ENCODE measurements at regions of chr11 and their contacts with region 1.

Region 1: GRCh38 chr11:116791002-116791812 is 472 bp downstream of the APOA5 start:
- DNase-seq: peak; percentile 81 to 87 (median 85)
- ATAC-seq: peak; percentile 71
- H3K4me3 ChIP-seq: no peak overlapping the region
- H3K4me1 ChIP-seq: peaks cover 11% of the 10 kb centered on the region
- CTCF ChIP-seq: peak; percentile 89

Region 2: DNA sequence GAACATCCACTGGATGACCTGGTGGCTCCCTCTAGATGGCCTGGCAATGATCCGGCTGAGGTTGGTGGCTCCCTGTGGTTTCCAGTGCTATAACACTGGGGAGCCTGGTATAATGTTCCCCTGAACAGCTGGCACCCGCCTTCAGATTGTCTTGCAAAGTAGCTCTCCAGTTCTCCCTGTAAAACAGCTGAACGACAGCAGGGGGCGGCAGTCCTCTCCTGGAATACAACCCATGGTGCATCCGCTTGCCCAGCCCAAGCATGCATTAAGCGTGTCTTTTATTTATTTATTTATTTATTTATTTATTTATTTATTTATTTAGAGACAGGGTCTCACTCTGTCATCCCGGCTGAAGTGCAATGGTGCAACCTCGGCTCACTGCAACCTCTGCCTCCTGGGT is 277.3 kb before region 1 on chr11:
- intact Hi-C with region 1: no loop called
- DNase-seq: peak in 2 of 3 donors; percentile 68 to 69
- ATAC-seq: peak; percentile 58
- H3K4me3 ChIP-seq: no peak overlapping the region
- H3K4me1 ChIP-seq: no peaks in the 10 kb centered on the region
- CTCF ChIP-seq: no peak

Region 3: GRCh38 chr11:116680349-116681125 is 110.7 kb before region 1 on chr11:
- intact Hi-C with region 1: no loop called
- DNase-seq: no peak
- ATAC-seq: no peak
- H3K4me3 ChIP-seq: no peak overlapping the region
- H3K4me1 ChIP-seq: no peaks in the 10 kb centered on the region
- CTCF ChIP-seq: no peak

Region 4: DNA sequence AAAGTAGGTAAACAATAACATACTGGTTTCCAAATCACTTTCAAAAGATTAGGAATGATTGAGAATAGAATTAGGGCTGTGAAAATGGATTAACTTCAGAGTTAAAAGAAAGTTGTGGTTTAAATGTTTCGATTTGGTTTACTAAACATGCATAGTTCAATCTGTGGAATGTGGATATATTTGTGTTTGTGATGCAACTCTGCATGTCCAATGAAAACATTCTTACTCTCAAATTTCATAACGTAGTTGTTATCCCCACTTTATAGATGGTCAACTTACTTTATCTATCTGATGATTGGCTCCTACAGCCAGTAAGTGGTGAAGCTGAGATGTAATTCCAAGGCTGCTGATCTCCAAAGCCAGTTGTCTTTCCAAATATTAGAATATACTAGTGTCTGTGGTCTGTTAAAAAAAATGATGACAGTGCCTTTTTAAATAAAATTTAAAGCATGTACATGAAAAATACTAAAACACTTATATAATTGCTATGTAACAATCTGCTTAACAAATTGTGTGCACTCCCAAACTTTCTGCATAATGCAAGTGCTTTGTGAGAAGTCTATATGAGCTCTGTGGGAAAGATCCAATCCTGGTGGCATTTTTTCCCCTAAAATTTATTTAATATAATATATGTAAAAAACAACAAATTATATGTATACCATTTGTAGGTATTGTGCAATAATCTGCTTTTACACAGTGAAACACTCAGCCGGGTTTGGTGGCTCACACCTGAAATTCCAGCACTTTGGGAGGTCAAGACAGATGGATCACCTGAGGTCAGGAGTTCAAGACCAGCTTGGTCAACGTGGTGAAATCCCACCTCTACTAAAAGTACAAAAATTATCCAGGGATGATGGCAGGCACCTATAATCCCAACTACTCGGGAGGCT is 316.7 kb after region 1 on chr11:
- intact Hi-C with region 1: loop called in 1 of 2 experiments (anchors 10 kb)
- DNase-seq: no peak
- ATAC-seq: no peak
- H3K4me3 ChIP-seq: no peak overlapping the region
- H3K4me1 ChIP-seq: no peaks in the 10 kb centered on the region
- CTCF ChIP-seq: no peak

Measured in mucosa of descending colon (tissue), 3 donors.